ENCODE measurements at regions of chr10 and their contacts with region 1.

Region 1: GRCh38 chr10:59625721-59626522 is 83.7 kb downstream of the SLC16A9 start:
- DNase-seq: peak; percentile 71
- ATAC-seq: peak; percentile 91
- H3K4me3 ChIP-seq: no peak overlapping the region
- H3K27ac ChIP-seq: no peak overlapping the region
- H3K4me1 ChIP-seq: no peaks in the 10 kb centered on the region
- H3K27me3 ChIP-seq: peaks cover 8% of the 10 kb centered on the region
- CTCF ChIP-seq: peak; percentile 91
- POLR2A ChIP-seq: no peak
- RAD21 ChIP-seq: peak; percentile 95

Region 2: DNA sequence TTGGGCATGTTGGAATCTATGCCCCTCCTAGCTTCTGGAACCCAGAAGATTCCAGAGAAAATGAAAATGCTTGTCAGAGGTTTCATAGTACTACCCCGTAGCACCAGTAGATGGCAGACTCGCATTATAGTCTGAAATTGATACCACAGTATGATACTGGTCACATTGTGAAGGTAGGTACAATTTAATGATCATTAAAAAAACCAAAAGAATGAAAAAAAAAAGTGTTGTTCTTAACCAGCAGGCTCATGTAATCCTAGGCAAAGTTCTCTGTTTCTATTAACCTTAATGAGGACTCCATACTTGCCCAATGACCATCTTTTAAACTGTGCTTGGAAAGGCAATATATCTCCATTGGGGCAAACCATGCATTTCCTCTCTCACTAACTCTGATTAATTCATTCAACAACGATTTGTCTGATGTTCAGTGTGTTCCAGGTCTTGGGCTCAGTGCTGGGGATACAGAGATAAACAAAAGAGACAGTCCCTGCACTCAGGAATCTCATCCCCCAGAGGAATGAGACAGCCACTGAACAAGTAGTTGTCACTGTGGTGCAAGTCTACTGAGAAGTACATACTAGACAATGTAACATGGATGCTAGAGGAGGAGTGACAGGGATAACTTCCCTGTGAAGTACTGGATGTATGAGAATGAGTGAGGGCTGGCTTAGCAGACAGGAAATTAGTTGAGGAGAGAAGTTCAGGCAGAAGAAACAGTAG is 673.0 kb before region 1 on chr10:
- CTCF ChIA-PET with region 1: interaction called, 3 read pairs
- POLR2A ChIA-PET with region 1: no interaction called
- dilution Hi-C with region 1: no loop called
- in situ Hi-C with region 1: loop called (anchors 25 kb)
- intact Hi-C with region 1: loop called (anchors 1 kb)
- DNase-seq: peak; percentile 42
- ATAC-seq: peak; percentile 84
- H3K4me3 ChIP-seq: no peak overlapping the region
- H3K27ac ChIP-seq: no peak overlapping the region
- H3K4me1 ChIP-seq: no peaks in the 10 kb centered on the region
- H3K27me3 ChIP-seq: peaks cover 12% of the 10 kb centered on the region
- CTCF ChIP-seq: peak; percentile 77
- POLR2A ChIP-seq: no peak
- RAD21 ChIP-seq: peak; percentile 72

Region 3: DNA sequence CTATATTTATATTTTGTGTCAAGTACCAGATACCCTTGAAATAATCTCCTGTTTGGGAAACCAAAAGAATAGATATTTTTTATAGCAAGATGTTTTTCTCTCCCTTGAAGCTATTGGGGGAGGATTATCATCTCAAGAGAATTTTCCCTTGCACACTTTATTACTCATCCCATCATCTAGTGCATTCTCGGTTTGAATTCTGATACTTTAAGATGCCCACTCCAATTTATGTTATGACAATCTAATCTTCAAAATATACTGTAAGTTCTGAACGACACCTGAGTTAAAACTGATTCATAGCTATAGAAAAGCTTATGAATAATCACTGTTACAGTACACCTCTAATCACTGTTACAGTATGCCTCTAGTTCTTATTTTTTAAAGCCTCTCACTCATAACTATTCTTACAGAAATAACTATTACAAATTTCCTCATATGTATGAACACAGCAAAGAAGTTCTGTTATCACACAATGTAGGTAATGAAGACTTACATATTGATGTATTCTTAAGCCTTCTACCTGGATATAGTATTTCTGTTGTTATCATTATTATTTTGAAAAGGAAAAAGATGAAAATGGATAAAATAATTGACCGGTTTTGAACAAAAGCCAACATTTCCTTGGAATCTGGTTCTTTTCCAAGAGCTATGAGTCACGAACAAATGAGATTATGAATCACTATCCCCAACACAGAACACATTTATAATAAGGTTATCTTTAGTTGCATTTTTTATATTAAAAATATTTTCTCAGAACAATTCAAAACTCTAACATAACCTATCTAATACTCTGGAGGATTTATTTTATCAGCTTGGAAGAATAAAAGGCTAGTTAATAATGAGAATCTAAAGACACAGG is 191.2 kb before region 1 on chr10:
- CTCF ChIA-PET with region 1: no interaction called
- POLR2A ChIA-PET with region 1: no interaction called
- dilution Hi-C with region 1: no loop called
- in situ Hi-C with region 1: no loop called
- intact Hi-C with region 1: no loop called
- DNase-seq: peak; percentile 41
- ATAC-seq: no peak
- H3K4me3 ChIP-seq: no peak overlapping the region
- H3K27ac ChIP-seq: no peak overlapping the region
- H3K4me1 ChIP-seq: no peaks in the 10 kb centered on the region
- H3K27me3 ChIP-seq: no peaks in the 10 kb centered on the region; the same call in 1 of the 2 replicates
- CTCF ChIP-seq: no peak
- POLR2A ChIP-seq: no peak
- RAD21 ChIP-seq: no peak

Region 4: DNA sequence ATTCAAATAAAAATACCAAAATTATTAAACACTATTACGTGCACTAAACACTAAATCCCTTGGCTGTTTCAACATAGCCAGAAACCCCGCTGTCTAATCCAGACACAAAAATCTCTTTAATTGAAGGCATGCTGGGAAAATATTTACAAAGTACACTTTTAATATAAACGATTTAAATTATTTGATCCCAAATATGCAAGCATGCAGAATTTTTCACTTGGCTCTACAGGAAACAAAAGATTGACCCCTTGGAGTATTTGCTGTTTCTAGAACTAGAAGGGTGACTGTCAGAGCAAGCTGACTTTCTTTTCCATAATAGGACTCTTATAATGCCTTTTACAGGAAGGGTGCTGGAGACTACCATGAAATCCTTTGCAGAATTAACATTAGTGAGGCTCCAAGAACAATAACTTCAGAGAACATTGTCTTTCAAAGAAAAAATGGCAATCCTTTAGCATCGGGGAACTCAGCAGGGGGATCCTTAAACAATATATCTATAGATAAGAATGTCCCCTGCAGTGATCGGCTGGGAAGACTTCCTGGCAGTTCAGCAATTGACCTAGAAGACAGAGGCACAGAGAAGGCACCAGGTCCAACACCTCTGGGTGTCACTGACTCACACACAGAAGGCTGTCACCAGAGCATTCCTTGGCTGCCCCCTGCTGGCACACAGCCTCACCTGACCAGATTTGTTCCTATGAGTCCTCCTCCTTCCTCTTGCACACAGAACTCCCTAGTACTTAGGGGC is 183.1 kb after region 1 on chr10:
- CTCF ChIA-PET with region 1: interaction called, 3 read pairs
- POLR2A ChIA-PET with region 1: no interaction called
- dilution Hi-C with region 1: no loop called
- in situ Hi-C with region 1: loop called (anchors 10 kb)
- intact Hi-C with region 1: loop called (anchors 1 kb)
- DNase-seq: peak; percentile 37
- ATAC-seq: peak; percentile 72
- H3K4me3 ChIP-seq: no peak overlapping the region
- H3K27ac ChIP-seq: no peak overlapping the region
- H3K4me1 ChIP-seq: no peaks in the 10 kb centered on the region
- H3K27me3 ChIP-seq: no peaks in the 10 kb centered on the region
- CTCF ChIP-seq: peak; percentile 52
- POLR2A ChIP-seq: no peak
- RAD21 ChIP-seq: peak; percentile 47

Region 5: DNA sequence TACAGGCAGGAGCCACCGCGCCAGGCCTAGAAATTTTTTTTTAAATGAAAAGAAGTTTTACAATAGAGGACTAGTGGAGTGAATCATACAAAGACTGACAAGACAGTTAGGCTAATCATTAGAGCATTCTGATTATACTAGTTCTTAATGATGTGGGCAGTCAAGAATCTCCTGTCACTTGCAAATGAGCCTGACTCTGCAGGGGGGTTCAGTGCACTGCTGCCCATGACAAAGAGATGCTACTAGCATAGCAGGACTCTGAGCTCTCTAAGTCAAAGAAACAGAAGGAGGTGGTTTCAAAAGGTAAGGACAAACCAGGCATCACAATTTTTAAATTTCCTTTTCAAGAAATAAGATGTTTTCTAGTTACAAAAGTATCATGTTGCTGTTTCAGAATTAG is 221.4 kb after region 1 on chr10:
- CTCF ChIA-PET with region 1: no interaction called
- POLR2A ChIA-PET with region 1: no interaction called
- dilution Hi-C with region 1: no loop called
- in situ Hi-C with region 1: no loop called
- intact Hi-C with region 1: no loop called
- DNase-seq: no peak
- ATAC-seq: no peak
- H3K4me3 ChIP-seq: no peak overlapping the region
- H3K27ac ChIP-seq: no peak overlapping the region
- H3K4me1 ChIP-seq: no peaks in the 10 kb centered on the region
- H3K27me3 ChIP-seq: no peaks in the 10 kb centered on the region
- CTCF ChIP-seq: no peak
- POLR2A ChIP-seq: no peak
- RAD21 ChIP-seq: no peak

Region 6: GRCh38 chr10:59906417-59907202 is 280.7 kb after region 1 on chr10 and contains the start of gene CCDC6:
- CTCF ChIA-PET with region 1: no interaction called
- POLR2A ChIA-PET with region 1: no interaction called
- dilution Hi-C with region 1: no loop called
- in situ Hi-C with region 1: no loop called
- intact Hi-C with region 1: loop called (anchors 1 kb)
- DNase-seq: peak; percentile 90
- ATAC-seq: peak; percentile 92
- H3K4me3 ChIP-seq: peak within 1 kb of the TSS; percentile 84
- H3K27ac ChIP-seq: peak within 1 kb of the TSS; percentile 66
- H3K4me1 ChIP-seq: peaks cover 3% of the 10 kb centered on the region
- H3K27me3 ChIP-seq: no peaks in the 10 kb centered on the region
- CTCF ChIP-seq: peak; percentile 85
- POLR2A ChIP-seq: peak; percentile 57
- RAD21 ChIP-seq: peak; percentile 60
- total RNA-seq, gene CCDC6: 30.8 and 44.2 TPM in 2 replicates

Region 7: DNA sequence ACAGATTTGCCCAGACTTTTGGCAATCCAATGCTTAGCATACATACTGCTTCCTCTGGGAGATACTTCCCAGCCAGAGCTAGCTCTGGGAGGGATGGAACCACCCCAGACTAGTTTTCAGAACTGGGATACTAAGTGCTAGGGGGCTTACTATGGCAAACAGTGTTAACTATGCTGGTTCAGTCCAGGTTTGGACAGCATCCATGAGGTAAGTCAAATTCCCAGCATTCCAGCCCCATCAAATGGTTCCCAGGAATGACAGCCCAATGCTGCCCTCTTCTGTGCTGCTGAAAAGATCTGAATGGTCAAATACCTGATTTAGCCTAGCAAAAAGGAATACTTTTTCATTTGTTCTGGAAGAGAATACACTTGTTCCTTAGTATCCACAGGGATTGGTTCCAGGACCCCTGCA is 422.2 kb after region 1 on chr10:
- CTCF ChIA-PET with region 1: interaction called, 3 read pairs
- POLR2A ChIA-PET with region 1: no interaction called
- dilution Hi-C with region 1: no loop called
- in situ Hi-C with region 1: loop called (anchors 25 kb)
- intact Hi-C with region 1: loop called (anchors 5 kb)
- DNase-seq: no peak
- ATAC-seq: no peak; the same call in 1 of the 2 replicates
- H3K4me3 ChIP-seq: no peak overlapping the region
- H3K27ac ChIP-seq: no peak overlapping the region
- H3K4me1 ChIP-seq: peaks cover 5% of the 10 kb centered on the region; the same call in 1 of the 2 replicates
- H3K27me3 ChIP-seq: no peaks in the 10 kb centered on the region
- CTCF ChIP-seq: peak; percentile 37; the same call in 1 of the 2 replicates
- POLR2A ChIP-seq: no peak
- RAD21 ChIP-seq: peak; percentile 48

Region 8: DNA sequence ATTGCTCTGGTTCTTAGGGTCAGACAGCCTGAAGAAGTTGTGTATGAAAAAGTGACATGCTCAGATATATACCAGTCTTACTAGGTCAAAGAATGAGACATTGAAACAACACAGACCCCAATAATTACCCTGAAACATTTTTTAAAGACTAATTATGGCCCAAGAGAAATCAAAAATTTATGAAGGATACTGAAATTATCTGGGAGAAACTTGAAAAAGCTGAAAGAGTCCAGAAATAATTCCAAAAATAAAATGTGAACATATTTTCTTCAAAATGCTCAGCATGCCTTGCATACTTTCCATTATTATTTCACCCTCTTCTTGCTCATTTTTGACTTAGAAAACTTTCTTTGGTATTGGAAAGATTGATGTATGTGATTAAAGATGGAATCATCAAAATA is 479.4 kb after region 1 on chr10:
- CTCF ChIA-PET with region 1: no interaction called
- POLR2A ChIA-PET with region 1: no interaction called
- dilution Hi-C with region 1: no loop called
- in situ Hi-C with region 1: no loop called
- intact Hi-C with region 1: loop called (anchors 1 kb)
- DNase-seq: no peak
- ATAC-seq: 0 out of 2 replicates have a peak, but pooled peaks have one; percentile 40
- H3K4me3 ChIP-seq: no peak overlapping the region
- H3K27ac ChIP-seq: no peak overlapping the region
- H3K4me1 ChIP-seq: no peaks in the 10 kb centered on the region
- H3K27me3 ChIP-seq: no peaks in the 10 kb centered on the region; the same call in 1 of the 2 replicates
- CTCF ChIP-seq: no peak
- POLR2A ChIP-seq: no peak
- RAD21 ChIP-seq: no peak

Region 9: DNA sequence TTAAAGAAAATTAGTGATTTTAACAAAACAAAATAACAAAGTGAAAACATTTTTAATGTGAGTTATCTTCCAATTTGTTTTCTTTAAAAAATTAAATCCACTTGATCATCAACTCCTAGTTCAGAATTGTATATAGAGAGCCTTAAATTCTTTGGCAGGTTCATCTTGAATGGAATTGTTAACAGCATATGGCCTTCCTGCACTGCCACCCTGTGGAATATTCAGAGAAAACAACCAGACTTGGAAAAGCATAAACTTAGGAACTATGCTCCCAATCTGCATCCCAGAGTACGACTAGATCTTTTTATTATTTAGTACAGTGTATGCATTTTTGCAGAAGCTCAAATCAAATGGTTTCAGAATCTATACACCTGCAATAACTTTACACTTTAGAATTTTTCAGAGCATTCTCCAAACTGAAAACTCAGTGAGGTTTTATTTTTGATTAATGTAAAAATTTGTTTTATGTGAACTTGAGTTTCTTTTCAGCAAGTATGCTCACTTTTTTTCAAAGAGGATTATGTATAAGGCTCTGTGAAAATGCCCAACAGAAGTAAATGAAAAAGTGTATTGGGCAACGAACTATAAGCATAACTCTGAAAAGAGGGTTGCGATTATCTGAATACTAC is 808.6 kb after region 1 on chr10:
- CTCF ChIA-PET with region 1: no interaction called
- POLR2A ChIA-PET with region 1: no interaction called
- dilution Hi-C with region 1: no loop called
- in situ Hi-C with region 1: loop called (anchors 25 kb)
- intact Hi-C with region 1: loop called (anchors 2 kb)
- DNase-seq: peak; percentile 74
- ATAC-seq: peak; percentile 58
- H3K4me3 ChIP-seq: no peak overlapping the region
- H3K27ac ChIP-seq: no peak overlapping the region
- H3K4me1 ChIP-seq: peaks cover 7% of the 10 kb centered on the region
- H3K27me3 ChIP-seq: peaks cover 2% of the 10 kb centered on the region; the same call in 1 of the 2 replicates
- CTCF ChIP-seq: peak; percentile 87
- POLR2A ChIP-seq: peak; percentile 50; the same call in 1 of the 2 replicates
- RAD21 ChIP-seq: peak; percentile 97